ENCODE measurements at regions of chr15 and their contacts with region 1.

Region 1: DNA sequence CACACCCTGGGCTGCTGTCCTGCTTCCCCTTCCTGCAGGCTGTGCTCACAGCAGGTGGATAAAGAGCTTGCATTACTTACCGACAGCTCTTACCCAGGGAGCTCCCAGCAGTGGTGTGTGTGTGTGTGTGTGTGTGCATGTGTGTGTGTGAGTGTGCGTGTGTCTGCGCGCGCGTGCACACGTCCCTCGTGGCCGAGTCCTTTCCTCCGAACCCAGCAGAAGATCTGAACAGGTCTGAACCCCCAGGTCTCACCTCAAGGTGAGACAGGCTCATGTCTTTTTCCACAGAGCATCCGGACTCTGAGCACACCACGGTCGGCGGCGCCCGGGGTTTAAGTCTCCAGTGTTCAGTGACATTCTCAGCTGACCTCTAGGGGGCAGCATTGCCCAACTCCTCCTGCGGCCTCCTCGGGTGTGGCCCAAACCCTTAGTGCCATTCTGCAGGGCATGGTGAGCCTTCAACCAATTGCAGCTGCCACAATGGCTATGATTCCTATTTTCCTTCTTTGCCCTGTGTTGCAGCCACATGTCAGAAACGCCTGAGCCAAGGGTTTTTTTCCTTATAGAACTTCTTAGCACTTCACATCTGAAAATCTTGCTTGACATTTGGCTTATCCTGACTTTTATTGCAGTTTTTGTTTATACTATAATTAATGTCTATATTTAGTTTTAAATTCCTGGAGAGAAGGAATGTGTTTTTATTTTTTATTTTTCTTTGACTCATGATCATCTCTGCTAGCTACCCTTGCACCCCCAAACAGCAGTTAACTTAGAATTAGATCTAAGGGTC is 64.1 kb upstream of the KLHL25 start:
- DNase-seq: peak; percentile 78

Region 2: GRCh38 chr15:86743283-86743903 is 884.6 kb after region 1 on chr15:
- in situ Hi-C with region 1: loop called (anchors 25 kb)
- DNase-seq: peak; percentile 71

Measured in KBM-7 (cell line).